BJ (cell line): ENCODE measurements at regions of chr20 and their contacts with region 1.

Region 1: DNA sequence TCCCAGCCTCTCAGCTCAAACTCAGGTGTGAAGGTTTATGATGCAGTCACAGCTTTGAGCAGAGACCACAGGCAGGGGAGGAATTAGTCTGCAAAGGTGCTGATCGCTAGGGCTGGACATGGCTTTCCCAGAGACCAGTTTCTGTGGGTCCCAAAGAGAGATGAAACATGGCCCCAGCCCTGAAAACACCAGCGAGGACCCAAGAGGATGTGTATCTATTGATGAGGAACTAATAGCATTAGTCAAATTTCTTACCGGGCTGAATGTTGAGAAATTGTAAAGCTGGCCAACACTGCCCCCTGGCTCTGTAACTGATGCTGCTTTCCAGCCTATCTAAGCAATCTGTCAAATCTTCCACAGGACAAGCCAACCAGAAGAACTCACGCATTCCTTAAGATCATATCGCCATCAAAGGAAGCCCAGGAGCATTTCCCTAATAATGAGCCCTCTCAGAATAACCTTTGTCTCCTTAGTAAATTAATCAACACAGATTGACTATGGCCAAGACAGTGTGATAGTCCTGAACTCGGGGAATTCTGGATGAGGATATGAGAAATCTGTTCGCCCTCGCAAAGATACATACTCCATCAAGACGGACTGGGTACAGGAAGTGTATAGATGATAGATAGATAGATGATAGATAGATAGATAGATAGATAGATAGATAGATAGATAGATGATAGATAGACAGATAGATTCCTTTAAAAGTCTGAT is 7.8 kb upstream of the ACSS1 start:
- DNase-seq: no peak
- H3K4me3 ChIP-seq: no peak overlapping the region
- H3K27me3 ChIP-seq: peaks cover 41% of the 10 kb centered on the region
- CTCF ChIP-seq: peak; percentile 82

Region 2: DNA sequence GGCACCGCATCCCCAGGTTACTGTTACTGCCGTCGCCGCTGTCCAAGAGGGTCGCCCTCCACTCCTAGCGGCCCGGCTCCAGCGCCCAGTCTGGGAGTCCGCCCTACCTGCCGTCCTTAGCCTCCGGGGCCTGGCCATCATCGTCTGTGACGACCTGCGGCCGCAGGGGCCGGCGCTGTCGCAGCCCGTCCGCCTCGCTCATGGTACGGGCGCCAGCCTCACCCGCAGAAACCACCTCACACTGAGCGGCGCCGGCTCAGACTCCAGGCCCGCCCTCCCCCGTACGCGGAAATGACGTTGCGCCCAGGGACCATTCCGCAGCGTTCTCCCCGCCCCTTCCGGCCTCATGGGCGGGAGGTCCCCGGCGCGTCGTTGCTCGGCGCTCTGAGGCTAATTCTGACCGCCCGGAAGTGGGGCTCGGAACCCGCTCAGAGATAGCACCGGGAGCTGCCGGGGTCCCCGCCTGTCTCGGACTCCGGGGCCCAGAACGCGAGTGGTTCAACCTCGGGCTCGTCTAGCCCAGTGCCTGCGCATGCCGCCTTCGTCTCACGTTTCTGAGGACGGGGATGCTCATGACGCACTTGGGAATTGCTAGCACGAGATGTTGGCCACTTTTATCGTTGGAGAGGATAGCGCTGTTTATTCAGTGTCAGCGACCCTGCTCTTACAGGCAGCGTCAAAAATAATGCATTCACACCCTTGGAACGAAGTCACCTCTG is 73.1 kb before region 1 on chr20 and contains the start of gene APMAP:
- CTCF ChIA-PET with region 1: interaction called, 216 read pairs
- POLR2A ChIA-PET with region 1: no interaction called
- DNase-seq: peak; percentile 44
- H3K4me3 ChIP-seq: peak within 1 kb of the TSS; percentile 89
- H3K27me3 ChIP-seq: 0 out of 2 replicates have a peak, but pooled peaks cover 2% of the 10 kb centered on the region
- CTCF ChIP-seq: no peak
- polyA plus RNA-seq, gene APMAP: 75.8 and 76.2 TPM in 2 replicates

Region 3: DNA sequence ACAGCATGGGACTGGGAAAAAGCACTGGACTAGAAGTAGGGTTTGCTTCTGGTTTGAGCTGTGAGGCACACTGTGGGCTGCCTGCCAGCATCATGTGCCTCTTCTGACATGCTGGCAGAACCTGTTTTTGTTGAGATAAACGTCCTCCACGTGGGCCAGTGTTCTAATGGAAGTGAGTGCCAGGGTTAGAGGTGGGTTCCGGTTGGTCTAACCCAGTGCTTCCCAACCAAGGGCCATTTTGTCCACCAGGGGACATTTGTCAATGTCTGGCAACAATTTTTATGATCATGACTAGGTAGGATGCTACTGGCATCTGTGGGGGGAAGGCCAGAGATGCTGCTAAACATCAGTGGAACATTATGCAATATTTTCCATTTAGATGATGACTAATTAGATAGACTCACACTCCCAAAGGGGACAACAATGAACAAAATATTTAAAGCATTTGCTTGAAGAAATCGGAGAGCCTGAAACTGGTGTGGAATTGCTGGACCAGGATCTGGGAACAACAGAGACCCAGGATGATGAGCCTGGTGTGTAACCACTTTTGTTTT is 65.4 kb before region 1 on chr20:
- CTCF ChIA-PET with region 1: interaction called, 216 read pairs
- POLR2A ChIA-PET with region 1: no interaction called
- DNase-seq: peak; percentile 84
- H3K4me3 ChIP-seq: no peak overlapping the region
- H3K27me3 ChIP-seq: 0 out of 2 replicates have a peak, but pooled peaks cover 4% of the 10 kb centered on the region
- CTCF ChIP-seq: peak; percentile 28